GM12878 (cell line): ENCODE measurements at regions of chr4 and their contacts with region 1.

Region 1: GRCh38 chr4:110049951-110050925 is 137.6 kb downstream of the EGF start:
- DNase-seq: peak; percentile 8
- ATAC-seq: peak; percentile 82
- H3K4me3 ChIP-seq: no peak overlapping the region
- H3K27ac ChIP-seq: no peak overlapping the region
- H3K4me1 ChIP-seq: peaks cover 6% of the 10 kb centered on the region
- H3K27me3 ChIP-seq: no peaks in the 10 kb centered on the region
- CTCF ChIP-seq: peak; percentile 79 to 84 (median 82)
- EP300 ChIP-seq: no peak
- POLR2A ChIP-seq: no peak
- RAD21 ChIP-seq: peak; percentile 93

Region 2: DNA sequence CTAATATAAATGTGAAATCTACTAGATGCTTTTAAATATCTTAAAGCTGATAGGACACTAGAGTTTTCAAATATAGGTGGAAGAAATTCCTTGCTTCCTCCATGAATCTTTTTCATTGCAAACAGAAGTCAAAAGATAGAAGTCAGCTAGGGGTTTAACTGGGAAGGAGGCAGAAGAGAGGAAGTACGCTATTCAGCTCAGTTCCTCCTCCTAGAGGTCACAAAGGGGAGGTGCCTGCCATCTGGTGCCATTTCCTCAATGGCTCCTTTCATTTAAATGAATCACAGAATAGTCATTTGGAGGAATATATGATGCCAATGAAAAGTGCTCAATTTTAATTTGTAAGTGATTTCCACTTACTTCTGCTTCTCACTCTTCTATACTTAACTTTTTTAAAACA is 756.2 kb before region 1 on chr4:
- CTCF ChIA-PET with region 1: no interaction called
- POLR2A ChIA-PET with region 1: no interaction called
- RAD21 ChIA-PET with region 1: no interaction called
- SMC1A ChIA-PET with region 1: no interaction called
- in situ Hi-C with region 1: no loop called
- intact Hi-C with region 1: no loop called
- DNase-seq: no peak
- ATAC-seq: peak; percentile 98
- H3K4me3 ChIP-seq: no peak overlapping the region
- H3K27ac ChIP-seq: no peak overlapping the region
- H3K4me1 ChIP-seq: no peaks in the 10 kb centered on the region
- H3K27me3 ChIP-seq: no peaks in the 10 kb centered on the region
- CTCF ChIP-seq: peak; percentile 63 to 76 (median 75)
- EP300 ChIP-seq: no peak
- POLR2A ChIP-seq: no peak
- RAD21 ChIP-seq: peak; percentile 39

Region 3: GRCh38 chr4:109803924-109804571 is 246.2 kb before region 1 on chr4:
- CTCF ChIA-PET with region 1: no interaction called
- POLR2A ChIA-PET with region 1: no interaction called
- RAD21 ChIA-PET with region 1: no interaction called
- SMC1A ChIA-PET with region 1: no interaction called
- in situ Hi-C with region 1: no loop called
- intact Hi-C with region 1: no loop called
- DNase-seq: peak; percentile 7
- ATAC-seq: peak; percentile 94
- H3K4me3 ChIP-seq: no peak overlapping the region
- H3K27ac ChIP-seq: no peak overlapping the region
- H3K4me1 ChIP-seq: no peaks in the 10 kb centered on the region
- H3K27me3 ChIP-seq: peaks cover 0 to 2% of the 10 kb centered on the region in 2 experiments; a peak in 1 of 4 replicates
- CTCF ChIP-seq: peak; percentile 50 to 67 (median 53); a peak in 5 of 6 replicates
- EP300 ChIP-seq: no peak
- POLR2A ChIP-seq: no peak
- RAD21 ChIP-seq: peak; percentile 70

Region 4: DNA sequence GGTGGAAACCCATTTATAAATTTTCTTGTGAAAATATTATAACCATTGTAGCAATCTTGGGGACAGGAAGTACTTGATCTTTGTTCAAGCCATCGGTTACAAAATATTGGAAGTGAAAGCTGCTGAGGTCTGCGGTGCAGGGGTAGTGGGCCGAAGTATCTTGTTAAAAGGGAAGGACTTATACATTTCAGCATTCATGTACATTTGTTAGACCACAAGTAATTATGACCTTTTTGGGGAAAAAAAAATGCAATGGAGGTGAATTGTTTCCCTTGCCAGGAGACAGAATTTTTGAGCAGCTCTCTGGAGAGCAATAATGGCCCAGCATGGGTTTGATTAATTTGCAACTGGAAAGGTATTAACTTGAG is 16.2 kb before region 1 on chr4:
- CTCF ChIA-PET with region 1: interaction called, 17 read pairs
- POLR2A ChIA-PET with region 1: interaction called, 4 read pairs
- RAD21 ChIA-PET with region 1: interaction called, 12 read pairs
- SMC1A ChIA-PET with region 1: interaction called, 20 read pairs
- in situ Hi-C with region 1: no loop called
- intact Hi-C with region 1: no loop called
- DNase-seq: peak; percentile 63
- ATAC-seq: peak; percentile 99
- H3K4me3 ChIP-seq: no peak overlapping the region
- H3K27ac ChIP-seq: no peak overlapping the region
- H3K4me1 ChIP-seq: peaks cover 14% of the 10 kb centered on the region
- H3K27me3 ChIP-seq: no peaks in the 10 kb centered on the region
- CTCF ChIP-seq: no peak
- EP300 ChIP-seq: peak; percentile 58 to 77; a peak in 3 of 4 replicates
- POLR2A ChIP-seq: no peak
- RAD21 ChIP-seq: no peak

Region 5: DNA sequence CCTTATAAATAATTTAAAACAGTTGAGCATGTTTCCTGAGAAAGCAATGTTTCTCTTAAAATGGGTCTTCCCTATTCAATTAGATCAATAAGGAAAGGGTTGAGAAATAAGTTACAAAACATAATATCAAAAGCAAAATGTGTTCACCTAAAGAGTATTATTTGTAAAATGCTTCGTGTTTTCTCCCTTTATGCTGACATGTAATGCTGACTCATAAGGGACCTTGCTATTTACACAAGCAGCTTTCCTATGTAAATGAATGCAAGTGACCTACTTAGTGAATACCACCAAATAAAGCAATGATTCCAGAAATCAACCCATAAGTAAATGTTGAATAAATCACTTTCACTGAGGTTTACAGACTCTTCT is 56.7 kb after region 1 on chr4:
- CTCF ChIA-PET with region 1: interaction called, 22 read pairs
- POLR2A ChIA-PET with region 1: no interaction called
- RAD21 ChIA-PET with region 1: interaction called, 6 read pairs
- SMC1A ChIA-PET with region 1: interaction called, 13 read pairs
- in situ Hi-C with region 1: no loop called
- intact Hi-C with region 1: loop called (anchors 5 kb)
- DNase-seq: no peak
- ATAC-seq: peak; percentile 79
- H3K4me3 ChIP-seq: no peak overlapping the region
- H3K27ac ChIP-seq: peak overlapping the region; percentile 14; the same call in 1 of the 2 replicates
- H3K4me1 ChIP-seq: peaks cover 26% of the 10 kb centered on the region
- H3K27me3 ChIP-seq: no peaks in the 10 kb centered on the region
- CTCF ChIP-seq: no peak
- EP300 ChIP-seq: peak in 1 of 2 experiments; percentile 30; a peak in 1 of 4 replicates
- POLR2A ChIP-seq: no peak
- RAD21 ChIP-seq: no peak

Region 6: GRCh38 chr4:110193822-110194761 is 143.9 kb after region 1 on chr4:
- CTCF ChIA-PET with region 1: interaction called, 16 read pairs
- POLR2A ChIA-PET with region 1: interaction called, 22 read pairs
- RAD21 ChIA-PET with region 1: interaction called, 22 read pairs
- SMC1A ChIA-PET with region 1: interaction called, 23 read pairs
- in situ Hi-C with region 1: no loop called
- intact Hi-C with region 1: loop called (anchors 1 kb)
- DNase-seq: peak; percentile 95
- ATAC-seq: peak; percentile 74
- H3K4me3 ChIP-seq: no peak overlapping the region
- H3K27ac ChIP-seq: peak overlapping the region; percentile 75
- H3K4me1 ChIP-seq: peaks cover 19% of the 10 kb centered on the region
- H3K27me3 ChIP-seq: no peaks in the 10 kb centered on the region
- CTCF ChIP-seq: no peak
- EP300 ChIP-seq: no peak
- POLR2A ChIP-seq: peak; percentile 89
- RAD21 ChIP-seq: no peak

Region 7: DNA sequence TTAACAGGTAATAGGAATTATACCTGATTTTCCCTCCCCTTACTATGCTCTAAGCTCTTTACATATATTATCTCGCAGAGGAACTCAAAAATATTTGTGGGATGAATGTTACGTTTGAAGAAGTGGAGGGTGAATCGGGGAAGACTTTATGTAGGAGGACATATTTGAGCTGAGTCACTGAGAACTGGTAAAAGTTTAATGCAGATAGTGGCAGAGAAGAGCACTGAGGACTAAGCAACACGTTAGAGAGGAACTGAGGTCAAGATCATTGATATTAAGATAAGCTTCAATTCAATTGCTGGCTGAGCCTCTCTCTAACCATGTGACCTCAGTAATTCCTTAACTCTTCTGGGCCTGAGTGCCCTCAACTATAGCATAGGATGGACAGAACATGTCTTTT is 174.6 kb after region 1 on chr4:
- CTCF ChIA-PET with region 1: interaction called, 10 read pairs
- POLR2A ChIA-PET with region 1: no interaction called
- RAD21 ChIA-PET with region 1: interaction called, 3 read pairs
- SMC1A ChIA-PET with region 1: interaction called, 3 read pairs
- in situ Hi-C with region 1: no loop called
- intact Hi-C with region 1: no loop called
- DNase-seq: no peak
- ATAC-seq: no peak
- H3K4me3 ChIP-seq: no peak overlapping the region
- H3K27ac ChIP-seq: no peak overlapping the region
- H3K4me1 ChIP-seq: no peaks in the 10 kb centered on the region
- H3K27me3 ChIP-seq: no peaks in the 10 kb centered on the region
- CTCF ChIP-seq: no peak
- EP300 ChIP-seq: no peak
- POLR2A ChIP-seq: no peak
- RAD21 ChIP-seq: no peak

Region 8: DNA sequence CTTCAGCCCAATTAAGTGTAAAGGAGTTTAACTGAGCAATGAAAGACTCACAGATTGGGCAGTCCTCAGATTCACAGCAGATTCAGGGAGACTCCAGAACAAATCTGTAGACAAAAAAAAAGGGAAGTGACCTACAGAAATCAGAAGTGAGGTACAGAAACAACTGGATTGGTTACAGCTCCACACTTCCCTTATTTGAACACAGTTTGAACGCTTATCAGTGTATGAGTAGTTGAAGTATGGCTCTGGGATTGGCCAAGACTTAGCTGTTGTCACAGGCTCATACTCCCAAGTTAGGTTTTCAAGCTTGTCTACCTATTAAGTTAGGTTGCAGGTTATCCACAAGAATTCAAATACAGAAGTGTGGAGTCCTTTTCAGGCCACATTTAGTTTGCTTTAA is 260.6 kb after region 1 on chr4:
- CTCF ChIA-PET with region 1: interaction called, 20 read pairs
- POLR2A ChIA-PET with region 1: no interaction called
- RAD21 ChIA-PET with region 1: interaction called, 3 read pairs
- SMC1A ChIA-PET with region 1: interaction called, 9 read pairs
- in situ Hi-C with region 1: no loop called
- intact Hi-C with region 1: no loop called
- DNase-seq: peak; percentile 17
- ATAC-seq: peak; percentile 88
- H3K4me3 ChIP-seq: no peak overlapping the region
- H3K27ac ChIP-seq: no peak overlapping the region
- H3K4me1 ChIP-seq: no peaks in the 10 kb centered on the region
- H3K27me3 ChIP-seq: no peaks in the 10 kb centered on the region
- CTCF ChIP-seq: no peak
- EP300 ChIP-seq: no peak
- POLR2A ChIP-seq: no peak
- RAD21 ChIP-seq: no peak